ENCODE measurements at regions of chr7 and their contacts with region 1.

Region 1: DNA sequence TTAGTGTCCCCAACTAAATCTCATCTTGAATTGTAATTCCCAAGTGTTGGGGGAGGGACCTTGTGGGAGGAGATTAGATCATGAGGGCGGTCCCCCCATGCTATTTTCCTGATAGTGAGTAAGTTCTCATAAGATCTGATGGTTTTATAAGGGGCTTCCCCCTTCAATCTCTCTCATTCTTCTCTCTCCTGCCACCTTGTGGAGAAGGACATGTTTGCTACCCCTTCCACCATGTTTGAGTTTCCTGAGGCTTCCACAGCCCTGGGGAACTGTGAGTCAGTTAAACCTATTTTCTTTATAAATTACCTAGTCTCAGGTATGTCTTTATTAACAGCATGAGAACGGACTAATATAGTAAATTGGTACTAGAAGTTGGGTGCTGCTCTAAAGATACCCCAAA is 365.6 kb downstream of the ANKRD7 start:
- DNase-seq: no peak
- CTCF ChIP-seq: peak; percentile 32

Region 2: DNA sequence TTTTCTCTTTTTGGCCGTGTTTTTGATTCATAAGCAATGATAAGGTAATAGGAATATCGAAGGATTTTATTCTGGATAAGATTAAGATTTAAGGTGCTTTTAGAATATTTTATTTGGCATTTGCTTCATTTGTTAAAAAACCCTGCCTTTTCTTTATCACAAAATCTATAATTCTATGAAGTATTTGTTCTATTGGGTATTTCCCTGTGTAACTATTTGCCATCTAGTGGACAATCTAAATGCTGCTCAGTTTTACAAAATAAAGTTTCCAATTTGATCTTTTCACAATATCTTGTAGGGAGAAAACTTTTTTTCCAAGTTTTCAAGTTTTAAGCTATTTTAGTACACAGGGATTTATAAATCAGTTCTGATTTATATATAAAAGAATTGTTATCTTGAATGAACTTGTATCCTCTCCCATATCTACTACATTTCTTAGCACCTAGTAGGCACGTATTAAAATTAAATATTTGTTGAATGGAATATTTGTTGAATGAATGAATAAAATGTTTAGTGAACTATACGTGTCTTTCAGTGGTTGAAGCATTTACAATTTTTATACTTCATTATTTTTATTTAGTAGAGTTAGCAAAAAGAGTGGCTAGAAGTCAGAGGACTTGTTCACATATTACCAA is 339.1 kb before region 1 on chr7:
- in situ Hi-C with region 1: loop called (anchors 25 kb)
- DNase-seq: no peak
- CTCF ChIP-seq: no peak